Kidney (tissue), 22 donors: ENCODE measurements at regions of chr3 and their contacts with region 1.

Region 1: DNA sequence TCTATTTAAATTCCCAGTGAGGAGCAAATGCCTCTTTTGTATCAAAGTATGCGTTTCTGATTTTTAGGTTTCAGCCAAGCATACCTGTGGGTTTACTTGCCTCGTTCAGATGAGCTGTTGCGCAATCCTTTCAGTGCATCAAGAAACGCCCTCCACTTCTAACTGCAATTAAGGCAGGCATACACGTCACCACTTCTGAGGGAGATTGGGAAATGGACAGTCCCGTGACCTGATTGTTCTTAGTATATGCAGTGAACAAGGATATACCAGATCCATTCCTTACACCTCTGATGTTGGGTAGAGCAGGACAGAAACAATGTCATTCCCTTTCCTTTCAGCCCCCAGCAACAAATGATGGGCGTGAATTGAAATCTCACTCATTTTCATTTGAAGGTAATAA is 219.0 kb downstream of the ITPR1 start:
- DNase-seq: no peak
- H3K4me3 ChIP-seq: no peak overlapping the region
- H3K27ac ChIP-seq: peak overlapping the region in 1 of 2 donors; percentile 49
- H3K4me1 ChIP-seq: peaks cover 0 to 7% (median 0%) of the 10 kb centered on the region in 3 donors
- H3K27me3 ChIP-seq: no peaks in the 10 kb centered on the region
- CTCF ChIP-seq: no peak

Region 2: DNA sequence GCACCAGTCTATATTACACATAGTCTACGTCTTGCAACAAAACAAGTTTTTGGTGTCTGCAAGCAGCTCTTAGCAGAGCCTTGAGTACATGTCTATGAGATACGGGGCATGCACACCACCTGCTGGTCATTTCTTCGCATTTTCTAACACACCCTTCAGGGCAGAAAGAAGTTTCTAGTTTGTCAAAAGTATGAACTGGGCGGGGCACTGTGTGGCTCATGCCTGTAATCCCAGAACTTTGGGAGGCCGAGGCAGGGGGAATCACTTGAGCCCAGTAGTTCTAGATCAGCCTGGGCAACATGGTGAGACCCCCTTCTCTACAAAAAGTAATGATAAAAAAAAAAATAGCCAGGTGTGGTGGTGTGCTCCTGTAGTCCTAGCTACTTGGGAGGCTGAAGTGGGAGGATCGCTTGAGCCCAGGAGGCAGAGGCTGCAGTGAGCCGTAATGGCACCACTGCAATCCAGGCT is 345.7 kb after region 1 on chr3:
- intact Hi-C with region 1: loop called (anchors 10 kb)
- DNase-seq: peak in 4 of 5 donors; percentile 73 to 87 (median 80)
- H3K4me3 ChIP-seq: no peak overlapping the region
- H3K27ac ChIP-seq: no peak overlapping the region
- H3K4me1 ChIP-seq: no peaks in the 10 kb centered on the region
- H3K27me3 ChIP-seq: no peaks in the 10 kb centered on the region
- CTCF ChIP-seq: peak; percentile 86

Region 3: GRCh38 chr3:5510300-5510699 is 798.2 kb after region 1 on chr3:
- intact Hi-C with region 1: no loop called
- DNase-seq: no peak
- H3K4me3 ChIP-seq: no peak overlapping the region
- H3K27ac ChIP-seq: no peak overlapping the region
- H3K4me1 ChIP-seq: no peaks in the 10 kb centered on the region
- H3K27me3 ChIP-seq: no peaks in the 10 kb centered on the region
- CTCF ChIP-seq: no peak